ENCODE measurements at regions of chr7 and their contacts with region 1.

Region 1: DNA sequence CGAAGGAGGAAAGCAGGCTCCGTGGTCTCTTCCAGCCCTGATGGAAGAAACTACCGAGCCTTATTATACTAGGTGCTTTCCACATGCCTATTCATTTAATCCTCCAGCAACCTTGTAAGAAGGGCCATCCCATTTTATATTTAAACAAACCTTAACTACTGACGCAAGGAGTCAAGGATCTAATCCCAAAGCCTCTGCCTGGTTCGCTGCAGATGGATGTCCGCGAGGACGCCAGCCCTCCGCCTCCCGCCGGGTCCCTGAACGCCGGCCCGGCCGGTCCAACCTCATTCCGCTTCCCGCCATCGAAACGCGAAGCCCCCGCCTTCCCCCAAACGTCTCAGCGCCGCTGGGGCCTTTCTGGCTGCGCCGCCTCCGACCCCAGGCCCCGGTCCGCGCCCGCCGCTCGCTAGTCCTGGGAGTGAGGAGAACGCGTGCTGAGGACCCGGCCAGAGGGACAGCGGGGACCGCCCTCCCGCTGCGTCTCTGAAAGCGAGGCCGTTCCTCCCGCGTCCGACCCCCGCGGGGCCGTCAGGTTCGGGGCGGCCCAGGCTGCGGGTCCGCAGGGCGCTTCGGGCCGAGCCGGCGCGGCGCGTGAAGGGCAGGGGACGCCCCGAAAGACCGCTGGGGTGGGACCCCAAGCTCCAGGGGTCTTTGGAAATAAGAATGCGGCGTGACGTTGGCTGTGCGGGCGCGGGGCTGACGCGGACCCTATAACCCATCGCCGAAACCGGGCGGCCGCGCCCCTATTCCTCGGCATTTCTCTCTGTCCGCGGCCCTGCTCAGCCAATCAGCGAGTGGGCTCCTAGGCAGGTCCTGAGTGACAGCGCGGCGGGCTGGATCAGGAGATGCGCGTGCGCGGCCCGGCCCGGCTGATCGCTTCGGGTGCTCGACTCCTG is at the start of gene ATP6V0E2:
- DNase-seq: peak; percentile 96 to 98 (median 97)
- ATAC-seq: peak; percentile 88 to 96 (median 95)
- H3K4me3 ChIP-seq: peak within 1 kb of the TSS; percentile 66 to 93 (median 80)
- H3K27ac ChIP-seq: peak within 1 kb of the TSS; percentile 79 to 97 (median 93)
- H3K4me1 ChIP-seq: peaks cover 0 to 41% (median 23%) of the 10 kb centered on the region in 12 donors
- H3K27me3 ChIP-seq: no peaks in the 10 kb centered on the region
- CTCF ChIP-seq: no peak
- POLR2A ChIP-seq: peak; percentile 58 to 73
- total RNA-seq, gene ATP6V0E2: 55.4 to 137 (median 92.3) TPM

Region 2: GRCh38 chr7:149771721-149772240 is 101.5 kb before region 1 on chr7:
- intact Hi-C with region 1: loop called in 1 of 10 experiments (anchors 5 kb)
- DNase-seq: peak; percentile 93 to 96 (median 93)
- ATAC-seq: peak; percentile 87 to 95 (median 92)
- H3K4me3 ChIP-seq: peak overlapping the region in 11 of 12 donors; percentile 57 to 89 (median 65)
- H3K27ac ChIP-seq: peak overlapping the region in 10 of 12 donors; percentile 16 to 86 (median 72)
- H3K4me1 ChIP-seq: peaks cover 0 to 46% (median 25%) of the 10 kb centered on the region in 12 donors
- H3K27me3 ChIP-seq: peaks cover 0 to 13% (median 1%) of the 10 kb centered on the region in 9 donors
- CTCF ChIP-seq: no peak
- POLR2A ChIP-seq: peak in 1 of 2 donors; percentile 30

Region 3: GRCh38 chr7:150404805-150405583 is 531.7 kb after region 1 on chr7:
- intact Hi-C with region 1: loop called in 1 of 10 experiments (anchors 10 kb)
- DNase-seq: peak; percentile 91 to 95 (median 93)
- ATAC-seq: peak; percentile 85 to 96 (median 94)
- H3K4me3 ChIP-seq: peak overlapping the region; percentile 54 to 80 (median 72)
- H3K27ac ChIP-seq: peak overlapping the region; percentile 86 to 98 (median 96)
- H3K4me1 ChIP-seq: peaks cover 0 to 34% (median 22%) of the 10 kb centered on the region in 12 donors
- H3K27me3 ChIP-seq: no peaks in the 10 kb centered on the region
- CTCF ChIP-seq: peak in 7 of 12 donors; percentile 6 to 43 (median 13)
- POLR2A ChIP-seq: peak in 1 of 2 donors; percentile 78